CD4-positive, alpha-beta memory T cell (primary cell): ENCODE measurements at regions of chr12 and their contacts with region 1.

Region 1: DNA sequence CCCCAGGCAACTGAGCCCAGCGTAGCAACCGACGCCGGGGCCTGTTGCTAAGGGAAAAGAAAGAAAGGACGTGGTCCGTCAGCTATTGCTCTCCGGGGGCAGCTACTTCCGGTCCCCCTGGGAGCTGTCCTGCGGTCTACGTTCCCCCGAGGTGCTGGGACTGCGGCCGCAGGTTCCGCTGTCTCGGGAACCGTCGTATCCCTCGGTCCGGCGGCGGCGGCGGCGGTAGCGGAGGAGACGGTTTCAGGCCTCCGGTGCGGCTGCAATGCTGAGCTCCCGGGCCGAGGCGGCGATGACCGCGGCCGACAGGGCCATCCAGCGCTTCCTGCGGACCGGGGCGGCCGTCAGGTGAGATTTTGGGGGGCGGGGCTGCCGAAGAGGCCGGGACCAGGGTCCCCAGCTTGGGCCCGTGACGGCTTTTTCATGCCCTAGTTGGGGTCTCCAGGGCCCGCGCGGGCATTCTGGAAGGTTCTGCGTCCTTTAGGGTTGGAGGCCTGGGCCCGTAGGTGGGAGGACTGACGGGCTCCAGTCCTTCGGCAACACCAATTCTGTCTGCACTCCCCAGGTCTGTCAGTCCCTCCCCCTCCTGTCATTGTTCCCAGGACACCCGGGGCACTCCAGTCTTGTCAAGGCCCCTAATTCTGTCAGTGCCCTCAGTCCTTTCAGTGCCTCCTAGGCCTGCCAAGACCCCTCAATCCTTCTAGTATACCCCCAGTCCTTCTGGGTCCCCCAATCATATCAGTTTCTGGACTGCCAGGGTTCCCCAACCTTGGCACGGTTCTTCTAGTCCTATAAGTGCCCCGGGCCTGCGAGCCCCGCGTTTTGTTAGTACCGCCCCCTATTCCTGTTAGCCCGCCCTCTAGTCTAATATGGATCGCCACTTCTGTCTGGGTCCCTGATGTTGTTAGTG is at the start of gene USP30:
- DNase-seq: peak; percentile 75 to 83 (median 79)
- H3K4me3 ChIP-seq: peak within 1 kb of the TSS; percentile 87 to 96
- H3K4me3 Mint-ChIP-seq: peak within 1 kb of the TSS; percentile 93 to 100 (median 96)
- H3K27ac ChIP-seq: peak within 1 kb of the TSS; percentile 85
- H3K27ac Mint-ChIP-seq: peak within 1 kb of the TSS; percentile 87 to 100 (median 98)
- H3K4me1 ChIP-seq: peaks cover 18% of the 10 kb centered on the region
- H3K4me1 Mint-ChIP-seq: peaks cover 10 to 27% (median 17%) of the 10 kb centered on the region in 4 donors
- H3K27me3 ChIP-seq: no peaks in the 10 kb centered on the region
- H3K27me3 Mint-ChIP-seq: no peaks in the 10 kb centered on the region
- total RNA-seq, gene USP30: 8.1 to 14.2 TPM

Region 2: DNA sequence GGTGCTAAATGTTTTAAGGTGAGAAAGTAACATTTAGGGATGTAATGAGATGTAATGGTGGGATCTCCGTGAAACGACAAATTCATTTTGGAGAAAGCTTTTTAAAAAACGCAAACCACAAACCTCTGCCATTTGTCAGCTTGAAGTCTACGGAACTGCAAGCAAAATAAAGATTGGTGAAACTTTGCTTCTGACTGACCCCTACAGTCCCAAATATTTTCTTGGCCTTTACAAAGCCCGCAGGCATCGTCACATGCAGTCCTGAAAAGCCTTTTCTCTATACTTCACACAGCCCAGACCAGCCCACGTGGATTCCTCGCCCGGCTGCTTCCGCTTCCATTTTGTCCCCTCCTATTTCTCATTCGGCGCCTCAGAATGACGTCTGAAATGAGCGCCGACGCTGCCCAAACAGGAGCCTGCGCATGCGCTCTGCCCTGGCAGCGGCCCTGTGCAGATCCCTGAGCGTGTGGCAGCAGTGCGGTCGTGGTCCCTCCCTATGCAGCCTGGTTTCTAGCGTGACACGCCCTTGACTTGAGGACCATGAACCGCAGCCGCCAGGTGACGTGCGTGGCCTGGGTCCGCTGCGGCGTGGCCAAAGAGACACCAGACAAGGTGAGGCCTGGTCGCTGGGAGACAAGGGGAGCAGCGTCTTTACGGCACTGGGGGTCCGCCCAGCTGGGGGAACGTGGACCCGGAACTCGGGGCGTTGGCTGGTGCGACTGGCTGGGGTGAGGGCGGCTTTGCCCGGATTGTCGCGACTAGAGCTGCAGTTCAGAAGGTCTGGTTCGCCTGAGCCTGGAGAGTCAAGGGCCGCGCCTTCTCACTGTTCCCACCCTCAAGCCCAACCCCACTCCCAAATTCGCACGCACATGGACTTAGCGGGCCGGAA is 1367.1 kb before region 1 on chr12 and contains the start of gene PWP1:
- CTCF ChIA-PET with region 1: no interaction called
- POLR2A ChIA-PET with region 1: interaction called, 3 read pairs
- intact Hi-C with region 1: loop called (anchors 2 kb)
- DNase-seq: peak; percentile 94 to 97 (median 95)
- H3K4me3 ChIP-seq: peak within 1 kb of the TSS; percentile 94 to 98
- H3K4me3 Mint-ChIP-seq: peak within 1 kb of the TSS; percentile 96 to 99 (median 97)
- H3K27ac ChIP-seq: peak within 1 kb of the TSS; percentile 78
- H3K27ac Mint-ChIP-seq: peak within 1 kb of the TSS; percentile 94 to 100 (median 98)
- H3K4me1 ChIP-seq: peaks cover 25% of the 10 kb centered on the region
- H3K4me1 Mint-ChIP-seq: peaks cover 14 to 37% (median 26%) of the 10 kb centered on the region in 4 donors
- H3K27me3 ChIP-seq: no peaks in the 10 kb centered on the region
- H3K27me3 Mint-ChIP-seq: no peaks in the 10 kb centered on the region
- total RNA-seq, gene PWP1: 24.3 to 25.6 TPM

Region 3: GRCh38 chr12:108846290-108846701 is 206.4 kb before region 1 on chr12:
- CTCF ChIA-PET with region 1: no interaction called
- POLR2A ChIA-PET with region 1: no interaction called
- intact Hi-C with region 1: no loop called
- DNase-seq: no peak
- H3K4me3 ChIP-seq: no peak overlapping the region
- H3K4me3 Mint-ChIP-seq: no peak overlapping the region
- H3K27ac ChIP-seq: no peak overlapping the region
- H3K27ac Mint-ChIP-seq: peak overlapping the region in 1 of 7 donors; percentile 59
- H3K4me1 ChIP-seq: no peaks in the 10 kb centered on the region
- H3K4me1 Mint-ChIP-seq: peaks cover 4 to 16% (median 8%) of the 10 kb centered on the region in 4 donors
- H3K27me3 ChIP-seq: no peaks in the 10 kb centered on the region
- H3K27me3 Mint-ChIP-seq: no peaks in the 10 kb centered on the region

Region 4: DNA sequence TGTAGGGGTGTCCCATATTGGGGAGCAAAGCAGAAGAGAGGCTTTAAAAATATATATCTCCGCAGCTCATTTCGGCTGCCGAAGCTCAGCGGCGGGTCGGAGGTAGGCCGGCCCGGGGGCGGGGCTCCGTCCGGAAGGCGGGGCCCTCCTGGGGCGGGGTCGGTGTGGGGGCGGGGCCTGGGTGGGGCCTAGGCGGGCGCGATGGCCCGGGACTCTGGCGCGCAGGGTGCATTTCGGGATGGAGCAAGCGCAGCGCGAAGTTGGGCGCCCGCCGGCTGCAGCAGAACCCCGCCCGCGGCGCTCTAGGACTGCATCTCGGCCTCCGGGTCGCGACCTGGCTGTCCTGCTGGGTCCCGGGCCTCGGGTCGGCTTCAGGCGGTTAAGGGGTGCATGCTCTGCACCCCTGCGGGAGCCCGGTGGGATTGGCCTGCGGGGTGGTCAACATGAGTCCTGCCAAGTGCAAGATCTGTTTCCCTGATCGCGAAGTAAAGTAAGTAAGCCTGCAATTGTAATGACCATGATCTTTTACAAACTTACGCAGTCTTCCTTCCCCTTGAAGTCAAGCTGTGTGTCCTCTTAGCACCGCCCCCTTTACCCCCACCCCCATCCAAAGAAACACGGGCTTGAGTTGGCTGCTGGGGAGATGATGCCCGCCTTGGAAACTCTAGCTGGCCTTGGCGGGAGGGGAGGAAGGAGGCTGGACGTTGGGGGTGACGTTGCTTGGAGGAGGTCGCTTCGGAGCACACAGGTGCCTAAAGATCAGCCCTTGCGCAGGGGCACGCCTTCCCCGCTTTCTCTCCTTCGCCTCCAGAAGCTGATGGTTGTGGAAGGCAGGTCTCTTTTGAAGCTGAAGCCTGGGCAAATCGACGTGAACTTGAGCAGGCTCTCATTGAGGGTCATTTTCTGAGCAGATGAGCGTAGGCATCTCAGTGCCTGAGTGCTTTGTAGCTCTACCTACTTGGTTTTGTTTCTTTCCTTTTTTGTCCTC is 102.1 kb after region 1 on chr12:
- CTCF ChIA-PET with region 1: no interaction called
- POLR2A ChIA-PET with region 1: interaction called, 6 read pairs
- intact Hi-C with region 1: loop called (anchors 2 kb)
- DNase-seq: peak; percentile 74 to 83 (median 77)
- H3K4me3 ChIP-seq: peak overlapping the region; percentile 68 to 75
- H3K4me3 Mint-ChIP-seq: peak overlapping the region; percentile 85 to 96 (median 94)
- H3K27ac ChIP-seq: peak overlapping the region; percentile 42
- H3K27ac Mint-ChIP-seq: peak overlapping the region; percentile 70 to 96 (median 87)
- H3K4me1 ChIP-seq: peaks cover 15% of the 10 kb centered on the region
- H3K4me1 Mint-ChIP-seq: peaks cover 10 to 24% (median 16%) of the 10 kb centered on the region in 4 donors
- H3K27me3 ChIP-seq: no peaks in the 10 kb centered on the region
- H3K27me3 Mint-ChIP-seq: no peaks in the 10 kb centered on the region

Region 5: DNA sequence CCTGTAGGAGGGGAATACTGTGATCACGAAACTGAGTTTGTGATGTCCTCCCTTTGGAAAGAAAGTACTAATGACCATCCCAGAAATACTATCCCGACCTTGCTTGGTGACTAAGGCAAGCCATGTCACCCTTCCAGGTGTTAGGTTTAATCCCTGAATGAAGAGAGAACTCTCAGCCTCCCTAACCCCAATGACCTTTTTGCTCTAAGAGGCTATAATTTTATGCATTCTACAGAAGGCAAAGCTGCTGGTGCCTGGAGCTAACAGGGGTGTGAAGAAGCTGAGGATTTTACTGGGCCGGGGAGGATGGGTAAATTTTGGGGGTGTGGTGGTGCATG is 1003.4 kb after region 1 on chr12:
- CTCF ChIA-PET with region 1: no interaction called
- POLR2A ChIA-PET with region 1: no interaction called
- intact Hi-C with region 1: no loop called
- DNase-seq: no peak
- H3K4me3 ChIP-seq: no peak overlapping the region
- H3K4me3 Mint-ChIP-seq: no peak overlapping the region
- H3K27ac ChIP-seq: no peak overlapping the region
- H3K27ac Mint-ChIP-seq: no peak overlapping the region
- H3K4me1 ChIP-seq: no peaks in the 10 kb centered on the region
- H3K4me1 Mint-ChIP-seq: peaks cover 0 to 4% (median under 1%) of the 10 kb centered on the region in 4 donors
- H3K27me3 ChIP-seq: no peaks in the 10 kb centered on the region
- H3K27me3 Mint-ChIP-seq: no peaks in the 10 kb centered on the region

Region 6: GRCh38 chr12:110124184-110124995 is 1071.7 kb after region 1 on chr12 and contains the start of gene IFT81:
- CTCF ChIA-PET with region 1: no interaction called
- POLR2A ChIA-PET with region 1: no interaction called
- intact Hi-C with region 1: loop called (anchors 10 kb)
- DNase-seq: peak; percentile 92 to 95 (median 93)
- H3K4me3 ChIP-seq: peak within 1 kb of the TSS; percentile 70 to 89
- H3K4me3 Mint-ChIP-seq: peak within 1 kb of the TSS; percentile 91 to 96 (median 94)
- H3K27ac ChIP-seq: peak within 1 kb of the TSS; percentile 72
- H3K27ac Mint-ChIP-seq: peak within 1 kb of the TSS; percentile 76 to 97 (median 95)
- H3K4me1 ChIP-seq: peaks cover 10% of the 10 kb centered on the region
- H3K4me1 Mint-ChIP-seq: peaks cover 3 to 15% (median 8%) of the 10 kb centered on the region in 4 donors
- H3K27me3 ChIP-seq: no peaks in the 10 kb centered on the region
- H3K27me3 Mint-ChIP-seq: peaks cover 5 to 10% of the 10 kb centered on the region in 2 donors
- total RNA-seq, gene IFT81: 1.1 to 1.3 TPM